ENCODE measurements at regions of chr13 and their contacts with region 1.

Region 1: GRCh38 chr13:77779552-77780272 is 82.2 kb downstream of the SLAIN1 start:
- DNase-seq: peak in 1 of 10 donors; percentile 22

Region 2: DNA sequence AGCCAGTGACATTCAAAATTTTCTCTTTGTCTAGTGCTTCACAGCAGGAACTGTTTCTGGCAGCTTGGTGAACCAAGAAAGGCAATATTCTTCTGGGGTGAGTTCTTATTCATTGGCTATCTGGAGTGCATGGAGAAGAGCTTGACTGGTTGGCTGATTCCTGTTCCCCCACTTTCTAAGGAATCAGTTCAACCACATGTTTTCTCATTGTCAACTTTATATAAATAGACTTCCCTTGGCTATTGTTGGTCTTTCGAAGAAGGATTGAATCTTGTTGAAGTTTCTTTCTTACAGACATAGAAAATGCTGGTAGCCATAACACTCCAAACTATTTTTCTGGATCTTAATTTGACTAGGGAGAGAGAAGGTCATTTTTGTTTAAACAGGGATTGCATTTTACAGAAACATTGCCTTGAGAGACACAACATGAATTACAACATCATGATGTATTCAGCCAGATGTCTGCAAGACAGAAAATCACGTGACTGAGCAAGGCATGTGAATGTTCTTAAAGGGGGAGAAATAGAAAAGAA is 53.7 kb after region 1 on chr13:
- intact Hi-C with region 1: loop called (anchors 10 kb)
- DNase-seq: no peak

Region 3: GRCh38 chr13:78121459-78122348 is 342.0 kb after region 1 on chr13:
- intact Hi-C with region 1: loop called (anchors 1 kb)
- DNase-seq: peak in 7 of 10 donors; percentile 37 to 79 (median 51)